GM12878 (cell line): ENCODE measurements at regions of chr1 and their contacts with region 1.

Region 1: GRCh38 chr1:92749024-92749634 is 35.8 kb downstream of the EVI5 start:
- DNase-seq: no peak
- ATAC-seq: peak; percentile 97
- H3K4me3 ChIP-seq: no peak overlapping the region
- H3K27ac ChIP-seq: no peak overlapping the region
- H3K4me1 ChIP-seq: no peaks in the 10 kb centered on the region
- H3K27me3 ChIP-seq: no peaks in the 10 kb centered on the region
- CTCF ChIP-seq: peak; percentile 75 to 77 (median 77)
- EP300 ChIP-seq: no peak
- POLR2A ChIP-seq: no peak
- RAD21 ChIP-seq: peak; percentile 76

Region 2: DNA sequence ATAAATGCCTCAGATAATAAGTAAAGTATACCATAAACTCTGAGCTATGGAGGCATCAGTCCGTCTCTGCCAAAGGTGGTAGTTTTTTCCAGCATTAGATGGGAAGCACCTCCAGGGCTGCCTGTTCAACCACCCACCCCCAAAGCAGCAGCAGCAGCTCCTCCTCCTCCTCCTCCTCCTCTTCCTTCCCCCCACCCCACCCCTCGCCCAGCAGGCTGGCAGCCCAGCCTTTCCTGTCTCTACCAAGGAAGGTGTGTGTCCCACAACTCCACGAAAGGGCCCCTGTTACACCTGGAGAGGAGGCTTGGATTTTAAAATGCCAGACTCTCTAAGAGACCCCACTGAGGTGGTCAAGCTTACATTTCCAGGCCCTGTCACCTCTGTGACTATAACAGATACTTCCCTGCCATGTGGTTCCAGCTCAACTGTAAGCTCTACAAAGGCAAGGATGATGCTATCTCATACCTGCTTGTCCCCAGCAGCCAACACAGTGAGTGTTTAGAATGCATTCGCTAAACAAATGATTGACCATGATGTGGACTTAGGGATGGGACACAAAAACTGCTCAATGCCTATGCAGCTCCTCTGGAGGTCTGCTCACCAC is 339.1 kb before region 1 on chr1:
- CTCF ChIA-PET with region 1: no interaction called
- POLR2A ChIA-PET with region 1: no interaction called
- RAD21 ChIA-PET with region 1: no interaction called
- SMC1A ChIA-PET with region 1: no interaction called
- in situ Hi-C with region 1: no loop called
- intact Hi-C with region 1: no loop called
- DNase-seq: no peak
- ATAC-seq: no peak
- H3K4me3 ChIP-seq: no peak overlapping the region
- H3K27ac ChIP-seq: no peak overlapping the region
- H3K4me1 ChIP-seq: no peaks in the 10 kb centered on the region; the same call in 1 of the 2 replicates
- H3K27me3 ChIP-seq: no peaks in the 10 kb centered on the region
- CTCF ChIP-seq: no peak
- EP300 ChIP-seq: no peak
- POLR2A ChIP-seq: no peak
- RAD21 ChIP-seq: no peak

Region 3: DNA sequence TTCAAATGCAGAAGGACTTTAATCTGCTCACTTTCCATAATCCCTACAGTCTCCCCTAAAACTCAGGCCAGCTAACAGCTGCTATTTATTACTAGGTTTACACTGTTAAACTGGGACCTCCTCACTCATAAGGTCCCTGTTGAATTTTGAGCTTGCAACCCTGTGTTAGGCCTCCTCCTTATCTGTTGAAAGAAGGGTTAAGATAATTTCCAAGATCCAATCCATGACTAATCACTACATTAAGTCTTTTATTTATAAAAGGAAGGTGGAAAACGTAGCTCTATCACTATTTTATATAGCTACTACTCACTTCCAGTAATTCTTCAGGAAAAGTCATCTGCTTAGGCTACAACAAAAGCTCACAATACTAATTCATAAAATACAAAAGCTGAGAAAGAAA is 43.7 kb before region 1 on chr1:
- CTCF ChIA-PET with region 1: interaction called, 11 read pairs
- POLR2A ChIA-PET with region 1: no interaction called
- RAD21 ChIA-PET with region 1: no interaction called
- SMC1A ChIA-PET with region 1: no interaction called
- in situ Hi-C with region 1: no loop called
- intact Hi-C with region 1: no loop called
- DNase-seq: no peak
- ATAC-seq: no peak
- H3K4me3 ChIP-seq: no peak overlapping the region
- H3K27ac ChIP-seq: no peak overlapping the region
- H3K4me1 ChIP-seq: no peaks in the 10 kb centered on the region
- H3K27me3 ChIP-seq: no peaks in the 10 kb centered on the region
- CTCF ChIP-seq: no peak
- EP300 ChIP-seq: no peak
- POLR2A ChIP-seq: no peak
- RAD21 ChIP-seq: no peak

Region 4: DNA sequence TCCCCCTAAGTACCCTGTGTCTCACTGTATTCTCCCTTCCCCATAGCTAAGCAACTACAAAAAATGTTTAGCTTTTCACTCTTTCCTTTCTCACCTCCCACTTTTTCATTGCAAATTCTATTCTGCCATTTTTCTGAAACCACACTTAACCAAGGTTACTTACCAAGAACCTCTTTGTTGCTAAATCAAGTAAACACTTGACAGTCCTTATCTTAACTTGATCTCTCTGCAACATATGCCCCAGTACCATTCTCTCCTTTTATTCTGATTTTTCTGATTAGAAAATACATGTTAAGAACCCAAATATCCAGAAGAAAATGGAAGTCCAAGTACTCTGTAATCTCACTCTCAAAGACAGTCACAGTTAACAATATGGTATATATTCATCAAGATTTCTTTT is 19.8 kb after region 1 on chr1:
- CTCF ChIA-PET with region 1: interaction called, 15 read pairs
- POLR2A ChIA-PET with region 1: no interaction called
- RAD21 ChIA-PET with region 1: interaction called, 3 read pairs
- SMC1A ChIA-PET with region 1: interaction called, 5 read pairs
- in situ Hi-C with region 1: no loop called
- intact Hi-C with region 1: no loop called
- DNase-seq: no peak
- ATAC-seq: no peak
- H3K4me3 ChIP-seq: no peak overlapping the region
- H3K27ac ChIP-seq: no peak overlapping the region
- H3K4me1 ChIP-seq: no peaks in the 10 kb centered on the region
- H3K27me3 ChIP-seq: no peaks in the 10 kb centered on the region
- CTCF ChIP-seq: no peak
- EP300 ChIP-seq: no peak
- POLR2A ChIP-seq: no peak
- RAD21 ChIP-seq: no peak

Region 5: GRCh38 chr1:92817986-92818764 is 69.0 kb after region 1 on chr1:
- CTCF ChIA-PET with region 1: interaction called, 178 read pairs
- POLR2A ChIA-PET with region 1: interaction called, 8 read pairs
- RAD21 ChIA-PET with region 1: interaction called, 65 read pairs
- SMC1A ChIA-PET with region 1: interaction called, 56 read pairs
- in situ Hi-C with region 1: loop called (anchors 5 kb)
- intact Hi-C with region 1: loop called (anchors 1 kb)
- DNase-seq: no peak
- ATAC-seq: peak; percentile 90
- H3K4me3 ChIP-seq: no peak overlapping the region
- H3K27ac ChIP-seq: no peak overlapping the region
- H3K4me1 ChIP-seq: no peaks in the 10 kb centered on the region
- H3K27me3 ChIP-seq: no peaks in the 10 kb centered on the region
- CTCF ChIP-seq: peak; percentile 62 to 86 (median 77)
- EP300 ChIP-seq: no peak
- POLR2A ChIP-seq: no peak
- RAD21 ChIP-seq: peak; percentile 73

Region 6: DNA sequence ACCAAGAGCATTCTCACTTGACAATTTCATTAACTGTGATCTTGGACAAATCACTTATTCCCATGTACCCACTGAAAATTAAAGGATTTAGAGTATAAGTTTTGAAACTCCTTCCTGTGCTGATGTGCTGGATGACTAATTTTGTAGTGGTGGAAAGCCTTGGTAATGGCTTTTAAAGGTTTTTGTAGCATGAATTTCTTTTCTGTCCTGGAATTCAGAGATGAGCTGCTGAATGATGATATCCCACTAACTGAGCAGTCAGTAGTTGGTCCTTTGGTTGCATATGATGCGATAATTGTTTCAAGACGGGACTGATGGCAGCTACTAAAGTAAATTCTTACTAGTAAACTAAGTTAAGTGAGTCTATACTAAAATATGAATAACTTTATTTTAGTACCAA is 87.9 kb after region 1 on chr1:
- CTCF ChIA-PET with region 1: interaction called, 12 read pairs
- POLR2A ChIA-PET with region 1: interaction called, 3 read pairs
- RAD21 ChIA-PET with region 1: interaction called, 5 read pairs
- SMC1A ChIA-PET with region 1: interaction called, 3 read pairs
- in situ Hi-C with region 1: no loop called
- intact Hi-C with region 1: no loop called
- DNase-seq: no peak
- ATAC-seq: no peak
- H3K4me3 ChIP-seq: peak overlapping the region; percentile 97; the same call in 1 of the 2 replicates
- H3K27ac ChIP-seq: no peak overlapping the region
- H3K4me1 ChIP-seq: no peaks in the 10 kb centered on the region
- H3K27me3 ChIP-seq: no peaks in the 10 kb centered on the region
- CTCF ChIP-seq: no peak
- EP300 ChIP-seq: no peak
- POLR2A ChIP-seq: no peak
- RAD21 ChIP-seq: no peak

Region 7: GRCh38 chr1:92886886-92887419 is 137.8 kb after region 1 on chr1:
- CTCF ChIA-PET with region 1: no interaction called
- POLR2A ChIA-PET with region 1: no interaction called
- RAD21 ChIA-PET with region 1: no interaction called
- SMC1A ChIA-PET with region 1: no interaction called
- in situ Hi-C with region 1: no loop called
- intact Hi-C with region 1: no loop called
- DNase-seq: no peak
- ATAC-seq: no peak
- H3K4me3 ChIP-seq: no peak overlapping the region
- H3K27ac ChIP-seq: no peak overlapping the region
- H3K4me1 ChIP-seq: no peaks in the 10 kb centered on the region
- H3K27me3 ChIP-seq: no peaks in the 10 kb centered on the region
- CTCF ChIP-seq: no peak
- EP300 ChIP-seq: no peak
- POLR2A ChIP-seq: no peak
- RAD21 ChIP-seq: no peak